Activated CD4-positive, alpha-beta T cell treated with anti-CD3 and anti-CD28 coated beads for 36 hours (primary cell): ENCODE measurements at regions of chr9 and their contacts with region 1.

Region 1: GRCh38 chr9:109934857-109935215 is 154.8 kb downstream of the PALM2AKAP2 start:
- DNase-seq: peak; percentile 30
- ATAC-seq: no peak
- H3K4me3 Mint-ChIP-seq: no peak overlapping the region
- H3K27ac Mint-ChIP-seq: peak overlapping the region; percentile 80
- H3K4me1 Mint-ChIP-seq: peaks cover 45% of the 10 kb centered on the region
- H3K27me3 Mint-ChIP-seq: peaks cover 3% of the 10 kb centered on the region

Region 2: GRCh38 chr9:109887079-109887478 is 47.8 kb before region 1 on chr9:
- CTCF ChIA-PET with region 1: interaction called, 3 read pairs
- POLR2A ChIA-PET with region 1: no interaction called
- intact Hi-C with region 1: loop called in 1 of 2 experiments (anchors 2 kb)
- DNase-seq: no peak
- ATAC-seq: peak; percentile 48
- H3K4me3 Mint-ChIP-seq: no peak overlapping the region
- H3K27ac Mint-ChIP-seq: peak overlapping the region; percentile 88
- H3K4me1 Mint-ChIP-seq: peaks cover 45% of the 10 kb centered on the region
- H3K27me3 Mint-ChIP-seq: no peaks in the 10 kb centered on the region

Region 3: DNA sequence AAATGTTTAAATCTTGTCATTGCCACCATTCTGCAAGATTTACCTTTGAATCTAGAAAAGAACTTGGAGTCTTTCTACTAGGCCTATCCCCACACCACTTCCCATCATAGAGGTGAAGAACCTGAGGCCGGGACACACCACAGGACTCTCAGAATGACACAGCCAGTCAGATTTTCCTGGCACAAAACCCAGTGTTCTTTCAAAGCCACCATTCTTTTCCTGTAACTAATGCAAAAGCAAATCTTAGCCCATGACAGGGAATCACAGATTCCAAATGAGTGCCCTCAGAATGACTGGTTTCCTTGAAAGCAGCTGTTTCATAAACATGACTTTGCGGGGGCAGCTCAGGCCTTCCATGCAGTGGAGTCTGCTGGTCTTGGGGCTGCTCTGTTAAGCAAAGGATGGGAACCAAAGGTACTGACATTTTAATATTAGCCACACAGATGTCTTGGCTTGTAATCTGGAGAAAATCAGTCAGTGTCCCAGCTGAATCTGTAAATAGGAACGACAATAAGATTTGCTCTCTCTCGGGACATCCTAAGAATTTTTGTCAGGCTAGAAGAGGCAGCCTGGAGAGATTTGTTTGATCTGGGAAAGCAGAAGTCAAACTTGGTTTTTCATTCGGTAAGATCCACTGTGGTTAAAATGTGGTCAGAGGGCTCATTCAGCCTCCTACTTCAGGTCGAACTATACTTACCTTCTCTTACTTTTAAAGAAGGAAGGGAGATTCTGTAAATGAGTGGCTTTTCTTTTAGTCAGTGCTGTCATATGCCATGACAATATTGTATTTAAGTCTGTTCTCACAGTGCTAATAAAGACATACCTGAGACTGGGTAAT is 39.7 kb before region 1 on chr9:
- CTCF ChIA-PET with region 1: no interaction called
- POLR2A ChIA-PET with region 1: no interaction called
- intact Hi-C with region 1: loop called (anchors 1 to 2 kb)
- DNase-seq: peak; percentile 80
- ATAC-seq: peak; percentile 75
- H3K4me3 Mint-ChIP-seq: peak overlapping the region; percentile 36
- H3K27ac Mint-ChIP-seq: peak overlapping the region; percentile 87
- H3K4me1 Mint-ChIP-seq: peaks cover 30% of the 10 kb centered on the region
- H3K27me3 Mint-ChIP-seq: peaks cover 6% of the 10 kb centered on the region

Region 4: GRCh38 chr9:109918339-109919163 is 16.3 kb before region 1 on chr9:
- CTCF ChIA-PET with region 1: interaction called, 8 read pairs
- POLR2A ChIA-PET with region 1: interaction called, 7 read pairs
- intact Hi-C with region 1: loop called (anchors 1 kb)
- DNase-seq: peak; percentile 65
- ATAC-seq: peak; percentile 87
- H3K4me3 Mint-ChIP-seq: peak overlapping the region; percentile 58
- H3K27ac Mint-ChIP-seq: peak overlapping the region; percentile 99
- H3K4me1 Mint-ChIP-seq: peaks cover 34% of the 10 kb centered on the region
- H3K27me3 Mint-ChIP-seq: no peaks in the 10 kb centered on the region

Region 5: DNA sequence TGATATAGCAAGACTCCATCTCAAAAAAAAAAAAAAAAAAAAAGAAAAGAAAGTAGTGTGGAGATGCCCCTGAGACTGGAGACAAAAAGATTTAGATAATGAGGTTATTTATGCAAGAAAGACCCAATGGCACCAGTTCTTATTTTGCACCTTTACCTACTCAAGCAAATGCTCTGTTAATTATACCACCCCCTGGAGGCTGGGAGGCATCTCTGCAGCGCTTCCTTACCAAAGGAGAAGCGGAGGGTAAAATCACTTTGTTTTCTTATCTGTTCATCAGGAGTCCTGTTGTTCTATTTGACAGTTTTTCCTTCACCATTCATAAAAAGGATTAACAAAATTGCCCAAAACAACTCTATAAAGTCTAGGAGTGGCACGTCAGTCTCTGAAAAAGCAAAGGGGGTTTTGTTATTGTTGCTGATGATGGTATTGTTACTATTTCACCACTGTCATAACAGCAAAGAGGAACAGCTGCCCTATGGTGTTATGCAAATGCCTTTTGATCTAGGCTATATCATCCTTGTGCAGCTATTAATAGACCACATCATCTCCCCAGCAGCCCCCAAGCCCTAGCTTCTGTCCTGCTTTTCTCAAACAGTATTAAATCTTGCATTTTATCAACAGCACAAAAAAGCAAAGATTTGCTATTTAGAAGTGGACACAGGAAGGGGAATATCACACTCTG is 19.1 kb after region 1 on chr9:
- CTCF ChIA-PET with region 1: interaction called, 13 read pairs
- POLR2A ChIA-PET with region 1: interaction called, 8 read pairs
- intact Hi-C with region 1: no loop called
- DNase-seq: no peak
- ATAC-seq: no peak
- H3K4me3 Mint-ChIP-seq: no peak overlapping the region
- H3K27ac Mint-ChIP-seq: no peak overlapping the region
- H3K4me1 Mint-ChIP-seq: peaks cover 44% of the 10 kb centered on the region
- H3K27me3 Mint-ChIP-seq: peaks cover 5% of the 10 kb centered on the region

Region 6: GRCh38 chr9:110048403-110048975 is 113.7 kb after region 1 on chr9:
- CTCF ChIA-PET with region 1: interaction called, 3 read pairs
- POLR2A ChIA-PET with region 1: interaction called, 4 read pairs
- intact Hi-C with region 1: loop called in 1 of 2 experiments (anchors 1 kb)
- DNase-seq: peak; percentile 93
- ATAC-seq: peak; percentile 89
- H3K4me3 Mint-ChIP-seq: peak overlapping the region; percentile 87
- H3K27ac Mint-ChIP-seq: peak overlapping the region; percentile 75
- H3K4me1 Mint-ChIP-seq: peaks cover 36% of the 10 kb centered on the region
- H3K27me3 Mint-ChIP-seq: peaks cover 10% of the 10 kb centered on the region